Right ventricle myocardium inferior (tissue), 1 donor: ENCODE measurements at regions of chr12 and their contacts with region 1.

Region 1: GRCh38 chr12:121626087-121626852 is at the start of gene ORAI1:
- DNase-seq: peak; percentile 99
- ATAC-seq: peak; percentile 97
- total RNA-seq, gene ORAI1: 11.5 TPM

Region 2: GRCh38 chr12:121550974-121551634 is 75.2 kb before region 1 on chr12:
- intact Hi-C with region 1: loop called (anchors 2 kb)
- DNase-seq: no peak
- ATAC-seq: no peak

Region 3: DNA sequence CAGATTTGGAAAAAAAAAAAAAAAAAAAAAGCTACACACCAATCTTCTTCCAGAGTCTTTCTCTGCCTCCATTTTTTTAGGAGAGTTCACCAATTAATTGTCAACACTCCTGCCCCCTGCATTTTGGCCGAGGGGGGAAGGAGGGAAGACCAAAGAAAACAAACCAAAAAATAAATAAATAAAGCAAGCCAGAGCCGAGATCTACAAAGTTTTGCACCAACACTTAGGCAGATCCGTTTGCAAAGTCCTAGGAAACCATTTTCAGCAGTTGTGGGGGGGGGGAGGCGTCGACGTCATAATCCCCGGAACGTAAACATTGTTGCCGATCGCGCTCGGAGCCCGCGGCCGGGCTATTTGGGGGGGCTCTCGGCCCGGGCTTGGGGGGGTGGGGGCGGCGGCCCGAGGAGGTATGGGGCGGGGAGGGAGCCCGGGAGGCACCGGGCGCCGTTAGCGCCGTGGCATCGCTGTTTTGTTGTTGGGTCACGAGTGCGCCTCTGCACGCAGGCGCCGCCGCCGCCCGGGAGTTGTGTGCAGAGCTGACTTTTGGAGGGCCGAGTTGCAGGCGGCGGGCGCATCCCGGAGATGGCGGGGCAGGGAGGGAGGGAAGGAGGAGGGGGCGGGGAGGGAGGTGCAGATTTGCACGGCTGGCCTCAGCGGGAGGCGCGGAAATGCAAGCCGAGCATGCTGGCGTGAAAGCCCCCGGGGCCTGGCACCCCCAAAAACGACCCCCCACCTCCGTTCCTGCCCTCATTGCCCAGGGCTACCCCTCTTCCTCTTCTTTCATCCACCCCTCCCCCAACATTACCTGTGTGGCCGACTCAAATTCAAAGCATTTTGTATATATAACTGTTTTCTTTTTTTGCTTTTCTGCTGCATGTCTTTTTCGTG is 46.0 kb before region 1 on chr12:
- intact Hi-C with region 1: loop called (anchors 2 kb)
- DNase-seq: peak; percentile 88
- ATAC-seq: peak; percentile 67

Region 4: GRCh38 chr12:121610239-121611149 is 15.8 kb before region 1 on chr12:
- intact Hi-C with region 1: no loop called
- DNase-seq: no peak
- ATAC-seq: peak; percentile 46

Region 5: GRCh38 chr12:121668750-121669520 is 42.7 kb after region 1 on chr12:
- intact Hi-C with region 1: loop called (anchors 5 kb)
- DNase-seq: no peak
- ATAC-seq: no peak

Region 6: GRCh38 chr12:121688966-121689365 is 62.7 kb after region 1 on chr12:
- intact Hi-C with region 1: loop called (anchors 5 kb)
- DNase-seq: no peak
- ATAC-seq: no peak

Region 7: DNA sequence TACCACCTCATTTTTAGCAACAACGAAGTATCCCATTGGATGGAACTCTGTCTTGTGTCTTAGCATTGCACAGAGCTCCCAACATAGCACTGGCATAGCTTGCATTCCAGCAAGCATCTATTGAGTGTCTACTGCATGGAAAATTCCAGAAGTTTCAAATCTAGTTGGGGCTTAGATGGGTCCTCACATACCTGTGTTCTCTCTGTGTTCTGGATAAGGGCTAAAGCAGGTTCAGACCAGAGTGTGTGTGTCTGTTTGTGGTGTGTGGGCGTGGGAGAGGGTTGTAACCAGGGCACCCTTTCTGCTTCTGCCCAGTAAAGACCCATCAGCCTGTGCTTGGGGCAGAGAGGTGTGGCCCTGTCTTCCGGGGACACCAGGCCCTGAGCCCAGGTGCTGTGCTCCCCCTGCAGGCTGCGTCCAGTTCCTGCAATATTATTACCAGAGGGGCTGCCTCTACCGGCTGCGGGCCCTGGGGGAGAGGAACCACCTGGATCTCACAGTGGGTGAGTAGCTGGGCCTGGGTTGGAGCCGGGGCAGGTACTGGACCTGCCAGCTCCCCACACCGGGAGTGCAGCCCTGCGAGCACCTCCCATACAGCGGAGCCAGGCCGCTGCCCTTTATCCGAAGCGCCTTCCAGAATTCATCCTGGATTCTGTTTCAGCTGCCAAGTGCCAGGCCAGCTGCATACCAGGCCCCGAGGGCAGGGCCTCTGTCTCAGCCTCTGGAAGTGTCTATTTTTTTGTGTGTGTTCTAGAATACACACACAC is 146.9 kb after region 1 on chr12:
- intact Hi-C with region 1: no loop called
- DNase-seq: peak; percentile 85
- ATAC-seq: peak; percentile 74